CD4-positive, alpha-beta T cell (primary cell): ENCODE measurements at regions of chr3 and their contacts with region 1.

Region 1: GRCh38 chr3:153621953-153622352 is 459.9 kb downstream of the RAP2B start:
- DNase-seq: peak in 4 of 14 experiments; percentile 28 to 72 (median 42)
- ATAC-seq: peak; percentile 34
- H3K4me3 ChIP-seq: no peak overlapping the region
- H3K4me3 Mint-ChIP-seq: peak overlapping the region; percentile 79
- H3K27ac ChIP-seq: peak overlapping the region in 1 of 2 donors; percentile 17
- H3K27ac Mint-ChIP-seq: peak overlapping the region; percentile 89
- H3K4me1 ChIP-seq: peaks cover 17% of the 10 kb centered on the region
- H3K4me1 Mint-ChIP-seq: peaks cover 57% of the 10 kb centered on the region
- H3K27me3 ChIP-seq: no peaks in the 10 kb centered on the region
- H3K27me3 Mint-ChIP-seq: no peaks in the 10 kb centered on the region
- CTCF ChIP-seq: no peak

Region 2: GRCh38 chr3:153640689-153641301 is 18.8 kb after region 1 on chr3:
- CTCF ChIA-PET with region 1: no interaction called
- POLR2A ChIA-PET with region 1: interaction called, 11 read pairs
- intact Hi-C with region 1: no loop called
- DNase-seq: no peak
- ATAC-seq: no peak
- H3K4me3 ChIP-seq: no peak overlapping the region
- H3K4me3 Mint-ChIP-seq: no peak overlapping the region
- H3K27ac ChIP-seq: no peak overlapping the region
- H3K27ac Mint-ChIP-seq: no peak overlapping the region
- H3K4me1 ChIP-seq: peaks cover 13% of the 10 kb centered on the region
- H3K4me1 Mint-ChIP-seq: peaks cover 39% of the 10 kb centered on the region
- H3K27me3 ChIP-seq: no peaks in the 10 kb centered on the region
- H3K27me3 Mint-ChIP-seq: no peaks in the 10 kb centered on the region
- CTCF ChIP-seq: no peak